CD14-positive monocyte (primary cell): ENCODE measurements at regions of chr9 and their contacts with region 1.

Region 1: DNA sequence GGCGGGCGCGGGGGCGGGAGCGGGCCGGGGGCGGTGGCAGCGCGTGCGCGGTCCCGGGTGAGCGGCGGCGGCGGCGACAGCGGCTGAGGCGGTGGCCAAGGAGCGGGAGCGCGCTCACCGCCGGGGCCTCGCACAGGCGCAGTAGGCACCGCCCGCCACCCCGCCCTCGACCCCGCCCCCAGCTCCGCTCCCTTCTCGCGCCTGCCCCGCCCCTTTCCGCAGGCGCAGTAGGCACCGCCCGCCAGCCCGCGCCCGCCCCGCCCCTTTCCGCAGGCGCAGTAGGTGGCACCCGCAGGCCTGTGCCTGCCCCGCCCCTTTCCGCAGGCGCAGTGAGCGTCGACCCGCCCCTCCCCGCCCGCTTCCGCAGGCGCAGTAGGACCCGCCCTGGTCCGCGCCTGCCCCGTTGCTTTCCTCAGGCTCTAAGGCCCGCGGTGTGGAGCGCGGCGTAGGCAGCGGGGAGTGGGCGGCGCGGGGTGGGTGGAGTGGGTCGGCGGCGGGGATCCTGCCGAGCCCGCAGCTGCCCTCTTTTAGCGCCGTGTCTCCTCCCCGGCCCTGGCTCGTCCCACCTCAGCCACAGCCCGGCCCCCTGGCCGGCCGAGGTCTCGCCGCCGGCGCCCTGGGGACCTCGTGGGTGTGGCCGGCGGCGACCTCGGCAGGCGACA is at the start of gene CAMSAP1:
- DNase-seq: peak; percentile 89 to 94 (median 93)
- H3K4me3 ChIP-seq: peak within 1 kb of the TSS; percentile 69 to 81 (median 77)
- H3K4me3 Mint-ChIP-seq: peak within 1 kb of the TSS; percentile 81 to 89
- H3K27ac ChIP-seq: peak within 1 kb of the TSS; percentile 27 to 83
- H3K27ac Mint-ChIP-seq: peak within 1 kb of the TSS in 6 of 7 donors; percentile 35 to 86 (median 78)
- H3K4me1 ChIP-seq: peaks cover 44 to 52% of the 10 kb centered on the region in 2 donors
- H3K4me1 Mint-ChIP-seq: peaks cover 56% of the 10 kb centered on the region
- H3K27me3 ChIP-seq: no peaks in the 10 kb centered on the region
- H3K27me3 Mint-ChIP-seq: peaks cover 0 to 2% (median 0%) of the 10 kb centered on the region in 3 donors
- CTCF ChIP-seq: no peak
- polyA plus RNA-seq, gene CAMSAP1: 0.71 to 9.0 (median 0.75) TPM

Region 2: GRCh38 chr9:135887585-135888050 is 19.9 kb before region 1 on chr9:
- intact Hi-C with region 1: loop called in 1 of 2 experiments (anchors 2 kb)
- DNase-seq: peak; percentile 82 to 86 (median 83)
- H3K4me3 ChIP-seq: peak overlapping the region; percentile 1 to 70 (median 28)
- H3K4me3 Mint-ChIP-seq: peak overlapping the region; percentile 72 to 89
- H3K27ac ChIP-seq: peak overlapping the region; percentile 82 to 86
- H3K27ac Mint-ChIP-seq: peak overlapping the region; percentile 91 to 96 (median 95)
- H3K4me1 ChIP-seq: peaks cover 31 to 43% of the 10 kb centered on the region in 2 donors
- H3K4me1 Mint-ChIP-seq: peaks cover 65% of the 10 kb centered on the region
- H3K27me3 ChIP-seq: no peaks in the 10 kb centered on the region
- H3K27me3 Mint-ChIP-seq: peaks cover 0 to 2% (median 0%) of the 10 kb centered on the region in 3 donors
- CTCF ChIP-seq: no peak

Region 3: GRCh38 chr9:135925496-135926133 is 18.1 kb after region 1 on chr9:
- intact Hi-C with region 1: loop called in 1 of 2 experiments (anchors 2 kb)
- DNase-seq: no peak
- H3K4me3 ChIP-seq: no peak overlapping the region
- H3K4me3 Mint-ChIP-seq: no peak overlapping the region
- H3K27ac ChIP-seq: peak overlapping the region in 1 of 2 donors; percentile 53
- H3K27ac Mint-ChIP-seq: peak overlapping the region in 6 of 7 donors; percentile 61 to 86 (median 80)
- H3K4me1 ChIP-seq: peaks cover 15 to 18% of the 10 kb centered on the region in 2 donors
- H3K4me1 Mint-ChIP-seq: peaks cover 16% of the 10 kb centered on the region
- H3K27me3 ChIP-seq: no peaks in the 10 kb centered on the region
- H3K27me3 Mint-ChIP-seq: no peaks in the 10 kb centered on the region
- CTCF ChIP-seq: no peak

Region 4: DNA sequence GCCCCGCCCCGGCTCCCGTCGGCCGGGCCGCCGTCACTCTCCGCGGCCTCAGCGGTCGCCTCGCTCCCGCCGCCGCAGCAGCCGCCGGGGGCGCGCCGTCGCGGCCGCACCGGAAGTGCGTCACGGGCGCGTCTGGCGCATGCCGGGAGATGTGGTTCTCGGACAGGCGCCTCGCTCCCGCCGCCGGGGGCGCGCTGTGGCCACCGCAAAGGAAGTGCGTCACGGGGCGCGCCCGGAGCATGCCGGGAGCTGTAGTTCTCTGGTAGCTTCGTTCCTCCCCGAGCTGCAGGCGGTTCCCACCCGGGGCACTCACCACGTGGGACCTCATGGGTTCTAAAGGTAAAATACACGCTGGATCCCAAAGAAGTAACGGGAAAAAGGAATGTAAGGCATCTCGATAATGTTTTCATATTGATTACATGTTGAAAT is 53.7 kb after region 1 on chr9 and contains the start of gene UBAC1:
- intact Hi-C with region 1: loop called (anchors 2 to 5 kb)
- DNase-seq: peak; percentile 94 to 96 (median 95)
- H3K4me3 ChIP-seq: peak within 1 kb of the TSS; percentile 53 to 88 (median 64)
- H3K4me3 Mint-ChIP-seq: peak within 1 kb of the TSS; percentile 93 to 94
- H3K27ac ChIP-seq: peak within 1 kb of the TSS; percentile 63 to 91
- H3K27ac Mint-ChIP-seq: peak within 1 kb of the TSS; percentile 91 to 96 (median 94)
- H3K4me1 ChIP-seq: peaks cover 45 to 51% of the 10 kb centered on the region in 2 donors
- H3K4me1 Mint-ChIP-seq: peaks cover 47% of the 10 kb centered on the region
- H3K27me3 ChIP-seq: no peaks in the 10 kb centered on the region
- H3K27me3 Mint-ChIP-seq: peaks cover 1 to 3% (median 2%) of the 10 kb centered on the region in 3 donors
- CTCF ChIP-seq: peak; percentile 23
- polyA plus RNA-seq, gene UBAC1: 35.8 to 63.1 (median 52.5) TPM

Region 5: GRCh38 chr9:135973277-135974219 is 66.0 kb after region 1 on chr9:
- intact Hi-C with region 1: no loop called
- DNase-seq: peak; percentile 73 to 81 (median 76)
- H3K4me3 ChIP-seq: peak overlapping the region in 1 of 3 experiments; percentile 27
- H3K4me3 Mint-ChIP-seq: peak overlapping the region in 1 of 2 donors; percentile 11
- H3K27ac ChIP-seq: peak overlapping the region; percentile 41 to 54
- H3K27ac Mint-ChIP-seq: peak overlapping the region; percentile 50 to 74 (median 65)
- H3K4me1 ChIP-seq: peaks cover 31 to 39% of the 10 kb centered on the region in 2 donors
- H3K4me1 Mint-ChIP-seq: peaks cover 33% of the 10 kb centered on the region
- H3K27me3 ChIP-seq: peaks cover 0 to 2% of the 10 kb centered on the region in 2 donors
- H3K27me3 Mint-ChIP-seq: peaks cover 1 to 6% (median 3%) of the 10 kb centered on the region in 3 donors
- CTCF ChIP-seq: no peak

Region 6: GRCh38 chr9:136245219-136246150 is 337.9 kb after region 1 on chr9 and contains the start of gene QSOX2:
- intact Hi-C with region 1: loop called in 1 of 2 experiments (anchors 10 kb)
- DNase-seq: peak; percentile 75 to 89 (median 76)
- H3K4me3 ChIP-seq: peak within 1 kb of the TSS; percentile 36 to 82 (median 79)
- H3K4me3 Mint-ChIP-seq: peak within 1 kb of the TSS; percentile 81 to 89
- H3K27ac ChIP-seq: no peak within 1 kb of the TSS
- H3K27ac Mint-ChIP-seq: peak within 1 kb of the TSS in 5 of 7 donors; percentile 58 to 84 (median 78)
- H3K4me1 ChIP-seq: peaks cover 18 to 23% of the 10 kb centered on the region in 2 donors
- H3K4me1 Mint-ChIP-seq: peaks cover 38% of the 10 kb centered on the region
- H3K27me3 ChIP-seq: no peaks in the 10 kb centered on the region
- H3K27me3 Mint-ChIP-seq: peaks cover 6 to 9% (median 8%) of the 10 kb centered on the region in 3 donors
- CTCF ChIP-seq: no peak
- polyA plus RNA-seq, gene QSOX2: 0.03 to 8.4 (median 0.17) TPM